ENCODE measurements at regions of chr9 and their contacts with region 1.

Region 1: GRCh38 chr9:7520396-7520795 is 279.2 kb downstream of the DMAC1 start:
- DNase-seq: no peak
- ATAC-seq: no peak
- H3K4me3 ChIP-seq: no peak overlapping the region
- H3K4me3 Mint-ChIP-seq: no peak overlapping the region
- H3K27ac ChIP-seq: no peak overlapping the region
- H3K27ac Mint-ChIP-seq: no peak overlapping the region
- H3K4me1 ChIP-seq: no peaks in the 10 kb centered on the region
- H3K4me1 Mint-ChIP-seq: no peaks in the 10 kb centered on the region
- H3K27me3 ChIP-seq: no peaks in the 10 kb centered on the region
- H3K27me3 Mint-ChIP-seq: no peaks in the 10 kb centered on the region

Region 2: DNA sequence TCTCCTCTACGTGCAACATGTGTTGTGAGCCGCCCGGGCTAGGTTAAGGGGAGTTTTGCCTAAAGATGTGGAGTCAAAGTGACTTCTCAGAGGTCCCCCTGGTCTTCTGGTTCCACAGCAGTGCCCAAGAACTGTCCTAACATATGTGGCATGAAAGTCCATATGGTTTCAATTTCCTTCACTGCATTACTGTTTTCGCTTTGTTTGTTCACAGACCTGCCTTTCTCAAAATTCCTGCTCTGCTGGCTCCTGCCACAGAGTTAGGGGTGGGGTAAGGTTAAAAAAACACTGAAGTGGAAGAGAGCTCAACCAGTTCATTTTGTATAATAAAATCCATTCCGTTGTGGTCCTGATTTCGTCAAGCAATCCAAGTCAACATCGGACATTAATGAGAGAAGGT is 10.2 kb before region 1 on chr9:
- CTCF ChIA-PET with region 1: no interaction called
- POLR2A ChIA-PET with region 1: interaction called in 1 of 2 experiments, 12 read pairs
- DNase-seq: no peak
- ATAC-seq: no peak
- H3K4me3 ChIP-seq: no peak overlapping the region
- H3K4me3 Mint-ChIP-seq: no peak overlapping the region
- H3K27ac ChIP-seq: no peak overlapping the region
- H3K27ac Mint-ChIP-seq: no peak overlapping the region
- H3K4me1 ChIP-seq: no peaks in the 10 kb centered on the region
- H3K4me1 Mint-ChIP-seq: no peaks in the 10 kb centered on the region
- H3K27me3 ChIP-seq: no peaks in the 10 kb centered on the region
- H3K27me3 Mint-ChIP-seq: peaks cover 4% of the 10 kb centered on the region in 2 donors

Region 3: DNA sequence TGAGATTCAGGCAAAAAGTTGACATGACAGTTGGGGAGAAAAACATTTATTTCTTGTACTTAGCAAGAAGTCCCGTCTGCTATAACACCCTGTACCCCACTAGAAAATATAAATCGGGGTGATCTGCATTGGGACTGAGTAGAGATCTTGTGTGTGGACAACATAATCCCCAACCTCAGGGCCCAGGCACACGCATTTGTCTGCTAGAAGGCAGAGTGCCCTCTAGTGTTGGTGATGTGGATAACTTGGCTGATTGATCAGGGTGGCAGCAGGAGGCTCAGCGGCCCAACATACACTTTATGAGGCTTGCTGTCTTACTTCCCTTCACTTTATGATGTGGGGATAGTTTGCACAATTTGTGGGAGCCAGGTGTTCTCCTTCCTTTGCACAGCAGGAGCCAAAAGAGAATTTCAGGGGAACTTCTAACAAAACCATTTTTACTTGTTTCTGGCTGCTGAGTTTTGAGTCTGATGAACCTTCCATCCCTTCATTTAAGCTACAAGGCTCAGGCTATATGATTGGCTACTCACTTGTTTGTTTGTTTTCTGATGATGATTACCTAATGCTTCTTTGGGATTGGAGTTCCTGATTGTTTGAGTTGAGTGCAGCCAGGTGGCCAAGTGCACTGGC is 16.0 kb after region 1 on chr9:
- CTCF ChIA-PET with region 1: no interaction called
- POLR2A ChIA-PET with region 1: no interaction called
- DNase-seq: peak in 15 of 35 experiments; percentile 0 to 40 (median 4)
- ATAC-seq: peak in 1 of 4 experiments; percentile 26
- H3K4me3 ChIP-seq: no peak overlapping the region
- H3K4me3 Mint-ChIP-seq: no peak overlapping the region
- H3K27ac ChIP-seq: no peak overlapping the region
- H3K27ac Mint-ChIP-seq: no peak overlapping the region
- H3K4me1 ChIP-seq: no peaks in the 10 kb centered on the region
- H3K4me1 Mint-ChIP-seq: no peaks in the 10 kb centered on the region
- H3K27me3 ChIP-seq: peaks cover 0 to 3% of the 10 kb centered on the region in 2 experiments
- H3K27me3 Mint-ChIP-seq: peaks cover 19 to 21% of the 10 kb centered on the region in 2 donors

Region 4: GRCh38 chr9:7592321-7593316 is 72.2 kb after region 1 on chr9:
- CTCF ChIA-PET with region 1: no interaction called
- POLR2A ChIA-PET with region 1: no interaction called
- DNase-seq: no peak
- ATAC-seq: no peak
- H3K4me3 ChIP-seq: no peak overlapping the region
- H3K4me3 Mint-ChIP-seq: no peak overlapping the region
- H3K27ac ChIP-seq: no peak overlapping the region
- H3K27ac Mint-ChIP-seq: no peak overlapping the region
- H3K4me1 ChIP-seq: no peaks in the 10 kb centered on the region
- H3K4me1 Mint-ChIP-seq: peaks cover 0 to 1% (median 0%) of the 10 kb centered on the region in 3 donors
- H3K27me3 ChIP-seq: no peaks in the 10 kb centered on the region
- H3K27me3 Mint-ChIP-seq: no peaks in the 10 kb centered on the region

Region 5: DNA sequence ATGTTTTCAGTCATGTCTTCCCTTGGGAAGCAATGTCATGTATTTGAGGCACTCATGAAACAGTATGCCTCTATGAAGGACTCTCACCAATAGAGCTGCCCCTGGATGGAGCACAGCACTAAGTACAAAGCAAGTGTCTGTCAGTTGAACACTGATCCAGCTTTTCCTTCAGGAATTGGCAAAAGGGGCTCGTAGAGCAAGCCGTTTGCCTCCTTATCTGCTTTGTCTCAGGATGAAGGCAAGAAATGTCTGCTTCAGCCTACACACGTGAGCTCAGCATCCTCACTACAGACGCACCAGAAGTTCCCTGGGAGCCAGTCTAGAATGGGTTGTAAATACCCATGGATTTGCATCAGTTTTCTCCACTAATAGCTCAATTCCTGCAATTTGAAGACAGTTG is 1022.1 kb after region 1 on chr9:
- CTCF ChIA-PET with region 1: no interaction called
- POLR2A ChIA-PET with region 1: no interaction called
- DNase-seq: no peak
- ATAC-seq: no peak
- H3K4me3 ChIP-seq: no peak overlapping the region
- H3K4me3 Mint-ChIP-seq: no peak overlapping the region
- H3K27ac ChIP-seq: no peak overlapping the region
- H3K27ac Mint-ChIP-seq: no peak overlapping the region
- H3K4me1 ChIP-seq: no peaks in the 10 kb centered on the region
- H3K4me1 Mint-ChIP-seq: no peaks in the 10 kb centered on the region
- H3K27me3 ChIP-seq: no peaks in the 10 kb centered on the region
- H3K27me3 Mint-ChIP-seq: peaks cover 0 to 2% of the 10 kb centered on the region in 2 donors

Measured in T-cell (primary cell).